ENCODE measurements at regions of chr10 and their contacts with region 1.

Region 1: DNA sequence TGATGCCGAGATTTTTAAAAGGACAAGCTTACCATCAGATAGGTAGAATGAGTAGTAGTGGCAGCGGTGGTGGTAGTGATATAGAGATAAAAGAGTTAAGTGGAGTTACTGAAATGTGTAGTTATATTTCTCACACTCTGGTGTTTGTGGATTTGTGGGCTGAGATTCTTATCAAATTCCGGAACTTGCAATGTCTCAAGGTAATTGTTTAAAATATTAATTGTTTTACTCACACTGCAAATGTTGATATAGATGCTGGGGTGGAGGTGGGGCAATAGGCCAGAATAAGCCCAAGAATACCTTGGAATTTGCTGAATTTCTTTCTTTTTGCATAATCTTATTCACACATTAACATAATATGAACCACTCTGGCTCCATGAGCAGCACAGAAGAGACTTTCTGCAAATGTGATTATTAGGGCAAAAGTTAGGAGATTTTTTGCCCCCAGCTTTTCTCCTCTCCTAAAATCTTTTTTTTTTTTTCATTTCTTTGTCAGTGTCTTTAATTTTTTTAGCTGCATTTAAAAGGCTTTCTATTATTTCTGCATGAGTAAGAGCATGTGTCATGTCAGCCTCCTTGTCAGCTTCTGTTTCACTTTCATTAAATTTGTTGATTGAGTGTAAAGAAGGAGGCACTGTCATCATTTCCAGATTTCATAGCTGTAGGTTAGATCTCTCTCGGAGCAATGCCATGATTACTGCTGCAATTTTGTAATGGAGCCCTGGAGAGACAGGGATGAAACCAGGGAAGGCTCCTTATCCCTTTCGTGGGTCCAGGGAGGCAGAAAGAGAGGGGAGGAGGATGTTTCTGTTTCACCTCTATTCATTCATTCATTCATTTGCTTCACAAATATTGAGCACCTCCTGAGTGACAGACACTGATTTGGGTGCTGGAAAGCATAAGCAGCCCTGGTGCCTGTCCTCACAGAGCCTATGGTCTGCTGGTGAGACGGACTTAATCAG is 13.1 kb upstream of the SGMS1 start:
- DNase-seq: no peak
- ATAC-seq: peak; percentile 97
- H3K4me3 ChIP-seq: no peak overlapping the region
- H3K27ac ChIP-seq: no peak overlapping the region
- H3K4me1 ChIP-seq: peaks cover 8% of the 10 kb centered on the region; the same call in 1 of the 2 replicates
- H3K27me3 ChIP-seq: no peaks in the 10 kb centered on the region
- CTCF ChIP-seq: no peak
- EP300 ChIP-seq: 0 out of 4 replicates have a peak, but pooled peaks of 1 of the 2 experiments have one; percentile 26
- POLR2A ChIP-seq: no peak
- RAD21 ChIP-seq: no peak

Region 2: DNA sequence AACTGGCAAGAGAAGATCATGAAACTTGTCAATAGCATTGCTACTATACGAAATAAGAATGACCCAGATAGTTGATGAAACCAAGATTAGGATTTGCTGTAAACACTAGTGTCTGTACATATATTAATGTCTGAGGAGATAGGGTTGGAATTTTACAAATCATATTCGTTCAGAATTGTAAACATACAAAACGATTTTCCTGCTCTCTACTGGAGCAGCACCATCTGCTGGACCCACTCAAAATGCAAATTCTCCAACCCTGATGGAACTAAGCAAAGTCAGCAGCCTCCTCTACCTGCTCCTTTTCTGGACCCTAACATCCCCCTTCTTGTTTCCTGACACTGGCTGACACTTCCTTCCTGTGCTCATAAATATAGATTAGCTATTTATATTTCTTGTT is 16.2 kb after region 1 on chr10:
- CTCF ChIA-PET with region 1: interaction called, 12 read pairs
- POLR2A ChIA-PET with region 1: interaction called, 6 read pairs
- RAD21 ChIA-PET with region 1: interaction called, 15 read pairs
- SMC1A ChIA-PET with region 1: interaction called, 105 read pairs
- in situ Hi-C with region 1: no loop called
- intact Hi-C with region 1: no loop called
- DNase-seq: no peak
- ATAC-seq: peak; percentile 27
- H3K4me3 ChIP-seq: no peak overlapping the region
- H3K27ac ChIP-seq: no peak overlapping the region
- H3K4me1 ChIP-seq: peaks cover 28% of the 10 kb centered on the region
- H3K27me3 ChIP-seq: no peaks in the 10 kb centered on the region
- CTCF ChIP-seq: peak; percentile 16 to 66 (median 53); a peak in 4 of 6 replicates
- EP300 ChIP-seq: no peak
- POLR2A ChIP-seq: no peak
- RAD21 ChIP-seq: peak; percentile 45

Region 3: DNA sequence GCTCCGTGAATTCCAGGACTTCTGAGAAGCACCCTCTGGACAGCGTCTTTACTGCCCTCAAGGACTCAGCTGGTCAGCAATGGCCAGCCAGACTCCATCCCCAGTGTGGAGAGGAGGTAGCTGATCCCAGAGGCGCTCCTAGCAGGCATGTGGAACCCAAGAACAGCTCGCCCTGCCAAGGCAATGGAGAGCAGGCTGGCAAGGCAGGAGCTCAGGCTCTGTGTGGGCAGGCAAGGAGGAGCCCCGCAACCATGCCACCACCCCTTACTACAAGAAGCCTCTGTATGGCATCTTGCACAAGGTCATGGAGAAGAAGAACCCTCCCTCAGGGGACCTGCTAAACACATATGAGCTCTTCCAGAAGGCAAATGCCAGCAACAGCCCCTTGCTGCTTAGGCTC is 21.3 kb after region 1 on chr10:
- CTCF ChIA-PET with region 1: interaction called, 7 read pairs
- POLR2A ChIA-PET with region 1: interaction called, 5 read pairs
- RAD21 ChIA-PET with region 1: no interaction called
- SMC1A ChIA-PET with region 1: interaction called, 105 read pairs
- in situ Hi-C with region 1: no loop called
- intact Hi-C with region 1: no loop called
- DNase-seq: no peak
- ATAC-seq: peak; percentile 4; the same call in 2 of the 3 replicates
- H3K4me3 ChIP-seq: no peak overlapping the region
- H3K27ac ChIP-seq: no peak overlapping the region
- H3K4me1 ChIP-seq: peaks cover 8% of the 10 kb centered on the region
- H3K27me3 ChIP-seq: no peaks in the 10 kb centered on the region
- CTCF ChIP-seq: no peak
- EP300 ChIP-seq: no peak
- POLR2A ChIP-seq: no peak
- RAD21 ChIP-seq: no peak

Measured in GM12878 (cell line).